Activated T-helper 1 cell treated with anti-CD3 and anti-CD28 coated beads, Interleukin-12 subunit alpha, Interleukin-12 subunit beta, Interleukin-2, Interleukin-4 antibody, amounts not matched to agents 30 ng/mL and 10 ng/mL and 1 ng/mL, durations not matched to agents 14 hours and 24 hours and 36 hours (primary cell): ENCODE measurements at regions of chr3 and their contacts with region 1.

Region 1: GRCh38 chr3:152268555-152269425 is at the start of gene MBNL1:
- DNase-seq: peak; percentile 81
- H3K4me3 Mint-ChIP-seq: peak within 1 kb of the TSS; percentile 90
- H3K27ac Mint-ChIP-seq: peak within 1 kb of the TSS; percentile 94
- H3K4me1 Mint-ChIP-seq: peaks cover 74% of the 10 kb centered on the region
- H3K27me3 Mint-ChIP-seq: no peaks in the 10 kb centered on the region
- total RNA-seq, gene MBNL1: 295 and 308 TPM in 2 replicates

Region 2: GRCh38 chr3:151724576-151725562 is 543.9 kb before region 1 on chr3:
- intact Hi-C with region 1: no loop called
- DNase-seq: no peak
- H3K4me3 Mint-ChIP-seq: no peak overlapping the region
- H3K27ac Mint-ChIP-seq: no peak overlapping the region
- H3K4me1 Mint-ChIP-seq: no peaks in the 10 kb centered on the region
- H3K27me3 Mint-ChIP-seq: peaks cover 1% of the 10 kb centered on the region

Region 3: GRCh38 chr3:152071924-152072323 is 196.9 kb before region 1 on chr3:
- intact Hi-C with region 1: loop called (anchors 5 kb)
- DNase-seq: no peak
- H3K4me3 Mint-ChIP-seq: no peak overlapping the region
- H3K27ac Mint-ChIP-seq: no peak overlapping the region
- H3K4me1 Mint-ChIP-seq: no peaks in the 10 kb centered on the region
- H3K27me3 Mint-ChIP-seq: peaks cover 2% of the 10 kb centered on the region

Region 4: GRCh38 chr3:152205097-152205593 is 63.6 kb before region 1 on chr3:
- intact Hi-C with region 1: loop called (anchors 1 kb)
- DNase-seq: no peak
- H3K4me3 Mint-ChIP-seq: peak overlapping the region; percentile 88
- H3K27ac Mint-ChIP-seq: peak overlapping the region; percentile 95
- H3K4me1 Mint-ChIP-seq: peaks cover 83% of the 10 kb centered on the region
- H3K27me3 Mint-ChIP-seq: no peaks in the 10 kb centered on the region

Region 5: DNA sequence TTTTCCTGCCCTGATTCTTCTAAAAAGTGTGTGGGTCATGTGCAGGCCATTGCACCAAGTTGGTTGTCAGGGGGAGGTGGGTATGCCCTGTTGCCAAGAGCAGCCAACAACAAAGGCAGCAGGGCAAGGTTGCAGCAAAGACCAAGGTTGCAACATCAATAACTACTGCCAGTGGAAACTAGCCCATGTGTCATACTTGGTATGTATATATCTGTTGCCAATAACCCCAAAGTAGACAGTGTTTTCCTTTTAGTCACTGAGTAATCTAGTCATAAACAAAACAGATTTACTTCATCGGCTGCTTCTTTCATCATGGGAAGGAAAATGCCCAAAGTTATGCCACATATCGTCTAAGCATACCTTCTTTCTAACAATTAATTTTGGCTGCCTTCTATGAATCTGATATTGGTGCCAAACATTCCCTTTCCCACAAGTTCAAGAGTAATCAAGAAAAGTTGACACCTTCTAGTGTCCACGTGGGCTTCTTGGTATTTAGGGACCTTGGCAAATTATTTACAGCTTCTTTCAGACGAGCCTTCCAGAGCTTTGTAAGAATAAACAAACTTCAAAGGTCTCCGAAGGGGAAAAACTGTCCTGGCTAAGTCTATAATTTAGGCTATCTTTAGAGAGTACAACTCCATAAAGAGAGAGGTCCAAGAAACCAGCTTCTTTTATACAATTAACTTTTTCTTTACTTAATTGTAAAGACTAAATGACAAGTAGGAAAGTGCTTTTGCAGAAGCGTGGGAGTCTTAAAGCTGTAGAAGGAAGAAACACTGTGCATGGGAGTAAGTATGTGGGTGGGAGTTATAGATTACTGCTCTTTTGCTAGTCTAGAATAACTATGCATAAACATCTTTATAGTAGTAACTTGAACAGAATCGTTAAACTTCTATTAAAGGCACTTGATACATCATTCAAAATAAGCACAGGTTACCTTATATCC is 10.1 kb before region 1 on chr3:
- intact Hi-C with region 1: loop called (anchors 1 kb)
- DNase-seq: peak; percentile 62
- H3K4me3 Mint-ChIP-seq: peak overlapping the region; percentile 81
- H3K27ac Mint-ChIP-seq: peak overlapping the region; percentile 98
- H3K4me1 Mint-ChIP-seq: peaks cover 90% of the 10 kb centered on the region
- H3K27me3 Mint-ChIP-seq: no peaks in the 10 kb centered on the region

Region 6: GRCh38 chr3:152298393-152299242 is 29.8 kb after region 1 on chr3:
- intact Hi-C with region 1: loop called (anchors 1 kb)
- DNase-seq: peak; percentile 29
- H3K4me3 Mint-ChIP-seq: peak overlapping the region; percentile 68
- H3K27ac Mint-ChIP-seq: peak overlapping the region; percentile 94
- H3K4me1 Mint-ChIP-seq: peaks cover 74% of the 10 kb centered on the region
- H3K27me3 Mint-ChIP-seq: no peaks in the 10 kb centered on the region

Region 7: DNA sequence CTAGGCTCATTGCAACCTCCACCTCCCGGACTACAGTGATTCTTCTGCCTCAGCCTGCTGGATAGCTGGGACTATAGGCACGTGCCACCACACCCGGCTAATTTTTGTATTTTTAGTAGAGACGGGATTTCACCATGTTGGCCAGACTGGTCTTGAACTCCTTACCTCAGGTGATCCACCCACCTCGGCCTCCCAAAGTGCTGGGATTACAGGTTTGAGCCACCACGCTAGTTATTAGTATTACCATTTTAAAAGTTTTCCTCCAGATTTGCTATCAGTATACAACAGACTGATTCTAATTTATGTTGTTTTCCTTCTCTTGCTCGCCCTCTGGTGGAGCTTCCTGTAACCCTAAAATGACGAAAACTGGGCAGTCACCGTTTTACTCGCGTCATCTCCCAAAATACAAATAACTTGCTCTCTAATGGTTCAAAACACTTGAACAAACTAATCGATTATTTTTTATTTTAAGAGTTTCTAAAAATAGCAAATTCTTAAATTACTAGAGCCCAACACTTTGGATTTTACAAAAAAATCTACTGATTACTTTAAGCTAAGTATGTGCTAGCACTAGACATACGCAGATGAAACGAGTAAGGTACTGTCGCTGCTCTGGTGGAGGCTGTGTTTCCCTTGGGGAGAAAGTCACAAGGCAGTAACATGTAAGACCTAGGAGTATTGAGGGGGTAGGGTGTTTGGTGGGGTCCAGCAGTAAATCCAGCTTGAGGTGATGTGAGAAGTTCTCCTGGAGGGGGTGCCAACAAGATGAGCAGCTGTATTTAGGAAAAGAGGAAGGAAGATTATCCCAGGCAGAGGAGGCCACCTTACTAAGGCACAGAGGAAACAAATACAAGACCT is 203.3 kb after region 1 on chr3:
- intact Hi-C with region 1: no loop called
- DNase-seq: peak; percentile 41
- H3K4me3 Mint-ChIP-seq: peak overlapping the region; percentile 1
- H3K27ac Mint-ChIP-seq: peak overlapping the region; percentile 10
- H3K4me1 Mint-ChIP-seq: peaks cover 9% of the 10 kb centered on the region
- H3K27me3 Mint-ChIP-seq: peaks cover 7% of the 10 kb centered on the region

Region 8: DNA sequence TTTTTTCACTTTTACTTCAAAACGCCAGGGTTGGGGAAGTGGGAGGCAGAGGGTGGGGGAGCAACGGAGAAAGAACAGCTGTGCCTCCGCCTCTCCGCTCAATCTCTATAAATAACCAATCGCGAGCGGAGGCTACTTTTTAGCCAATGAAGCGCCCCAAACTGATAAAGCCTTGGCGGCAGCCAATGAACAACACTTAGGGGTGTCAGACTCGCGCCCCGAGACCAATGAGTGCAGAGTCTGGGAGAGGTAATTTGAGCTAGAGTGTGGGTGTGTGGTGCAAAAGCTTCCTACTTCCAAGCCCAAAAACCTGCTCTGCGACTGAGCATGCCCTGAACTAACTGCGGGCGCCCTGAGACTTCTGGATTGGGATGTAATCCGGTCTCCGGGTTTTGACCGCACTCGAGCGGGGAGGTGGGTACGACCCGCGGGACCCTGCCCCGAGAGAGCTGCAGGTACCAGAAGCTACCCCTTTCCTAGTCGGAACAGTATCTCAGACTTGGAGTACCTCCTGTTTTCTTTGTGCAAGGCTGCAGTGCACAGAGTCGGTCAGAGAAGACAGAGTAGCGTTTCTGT is 892.4 kb after region 1 on chr3:
- intact Hi-C with region 1: loop called (anchors 5 kb)
- DNase-seq: peak; percentile 91
- H3K4me3 Mint-ChIP-seq: peak overlapping the region; percentile 90
- H3K27ac Mint-ChIP-seq: peak overlapping the region; percentile 97
- H3K4me1 Mint-ChIP-seq: peaks cover 47% of the 10 kb centered on the region
- H3K27me3 Mint-ChIP-seq: no peaks in the 10 kb centered on the region